ENCODE measurements at regions of chr1 and their contacts with region 1.

Region 1: DNA sequence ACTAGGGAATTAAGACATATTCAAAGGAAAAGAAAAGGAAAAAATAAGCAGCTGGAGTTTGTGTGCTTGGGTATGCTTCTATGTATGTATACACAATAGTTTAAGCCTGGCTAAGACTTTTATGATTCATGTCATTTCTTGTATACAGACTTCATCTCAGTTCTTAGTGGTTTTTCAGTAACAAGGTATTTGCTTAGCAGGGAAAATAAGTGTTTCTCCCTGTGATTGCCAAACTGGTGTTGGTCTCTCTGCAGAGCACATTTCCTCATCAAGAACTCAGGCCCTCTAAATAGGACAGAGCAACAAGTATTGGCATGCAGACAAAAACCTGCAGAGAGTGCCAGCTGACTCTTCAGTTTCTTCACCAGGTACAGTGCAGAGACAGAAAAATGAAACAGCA is 484.4 kb upstream of the ZRANB2 start:
- DNase-seq: no peak
- ATAC-seq: no peak
- H3K4me3 Mint-ChIP-seq: no peak overlapping the region
- H3K27ac Mint-ChIP-seq: no peak overlapping the region
- H3K4me1 Mint-ChIP-seq: no peaks in the 10 kb centered on the region
- H3K27me3 Mint-ChIP-seq: no peaks in the 10 kb centered on the region

Region 2: DNA sequence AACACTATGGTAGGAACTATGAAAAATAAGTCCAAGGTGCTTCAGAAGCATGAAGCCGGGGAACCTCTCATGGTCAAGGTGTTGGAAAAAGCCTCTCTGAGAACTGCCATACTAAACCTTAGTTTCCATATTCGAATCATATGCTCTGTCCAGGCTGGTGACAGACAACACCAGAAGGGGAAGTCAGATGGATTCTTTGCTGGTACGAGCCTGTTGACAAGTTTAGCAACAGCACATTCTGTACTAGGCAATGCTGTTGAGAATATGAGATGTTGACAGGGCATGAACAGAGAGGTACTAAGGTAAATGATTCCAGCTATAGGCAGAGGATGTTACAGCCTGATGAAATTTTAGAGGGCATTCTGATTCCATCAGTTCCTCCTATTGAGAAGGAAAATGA is 23.1 kb before region 1 on chr1:
- CTCF ChIA-PET with region 1: no interaction called
- POLR2A ChIA-PET with region 1: no interaction called
- intact Hi-C with region 1: loop called in 1 of 2 experiments (anchors 2 kb)
- DNase-seq: no peak
- ATAC-seq: no peak
- H3K4me3 Mint-ChIP-seq: no peak overlapping the region
- H3K27ac Mint-ChIP-seq: no peak overlapping the region
- H3K4me1 Mint-ChIP-seq: no peaks in the 10 kb centered on the region
- H3K27me3 Mint-ChIP-seq: no peaks in the 10 kb centered on the region